CD8-positive, alpha-beta T cell (primary cell): ENCODE measurements at regions of chr1 and their contacts with region 1.

Region 1: DNA sequence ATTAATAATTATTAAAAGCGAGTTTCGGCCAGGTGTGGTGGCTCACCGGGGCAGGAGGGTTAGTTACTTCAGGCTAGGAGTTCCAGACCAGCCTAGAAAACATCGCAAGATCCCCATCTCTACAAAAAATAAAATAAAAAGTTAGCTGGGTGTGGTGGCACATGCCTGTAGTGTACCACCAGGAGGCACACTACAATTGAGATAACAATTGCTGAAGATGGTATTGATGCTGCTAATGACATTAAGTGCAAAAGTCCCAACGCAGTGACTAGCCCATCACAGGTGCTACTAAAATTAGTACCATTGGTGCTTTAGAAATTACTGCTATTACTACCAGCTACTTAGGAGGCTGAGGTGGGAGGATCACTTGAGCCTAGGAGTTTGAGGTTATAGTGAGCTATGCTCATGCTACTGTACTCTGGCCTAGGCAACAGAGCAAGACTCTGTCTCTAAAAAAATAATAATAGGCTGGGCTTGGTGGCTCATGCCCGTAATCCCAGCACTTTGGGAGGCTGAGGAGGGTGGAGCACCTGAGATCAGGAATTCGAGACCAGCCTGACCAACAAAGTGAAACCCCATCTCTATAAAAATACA is 156.6 kb downstream of the GREM2 start:
- DNase-seq: peak in 2 of 9 experiments; percentile 38 to 39
- ATAC-seq: no peak
- H3K4me3 ChIP-seq: no peak overlapping the region
- H3K4me3 Mint-ChIP-seq: no peak overlapping the region
- H3K27ac ChIP-seq: no peak overlapping the region
- H3K27ac Mint-ChIP-seq: no peak overlapping the region
- H3K4me1 ChIP-seq: no peaks in the 10 kb centered on the region
- H3K4me1 Mint-ChIP-seq: no peaks in the 10 kb centered on the region
- H3K27me3 ChIP-seq: no peaks in the 10 kb centered on the region
- H3K27me3 Mint-ChIP-seq: no peaks in the 10 kb centered on the region
- CTCF ChIP-seq: no peak

Region 2: DNA sequence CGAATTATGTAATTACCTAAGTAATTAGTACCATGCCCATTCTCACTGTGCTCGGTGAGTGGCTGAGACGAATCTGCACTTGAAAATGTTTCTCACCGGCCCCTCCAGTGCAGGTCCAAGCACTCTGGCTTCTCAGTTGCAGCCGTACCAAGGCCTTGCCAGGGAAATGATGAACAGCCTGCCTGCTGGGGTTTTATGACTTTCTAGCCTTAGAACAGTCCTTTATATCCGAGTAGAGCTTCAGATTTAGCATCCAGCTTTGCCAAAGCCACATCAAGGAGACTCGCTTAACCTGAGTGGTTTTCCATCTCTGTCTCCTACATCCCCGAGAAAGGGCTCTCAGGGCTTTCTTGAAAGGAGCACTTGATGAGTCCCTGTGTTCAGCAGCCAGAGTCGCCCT is 73.3 kb after region 1 on chr1:
- CTCF ChIA-PET with region 1: no interaction called
- POLR2A ChIA-PET with region 1: no interaction called
- intact Hi-C with region 1: no loop called
- DNase-seq: no peak
- ATAC-seq: no peak
- H3K4me3 ChIP-seq: no peak overlapping the region
- H3K4me3 Mint-ChIP-seq: no peak overlapping the region
- H3K27ac ChIP-seq: no peak overlapping the region
- H3K27ac Mint-ChIP-seq: no peak overlapping the region
- H3K4me1 ChIP-seq: no peaks in the 10 kb centered on the region
- H3K4me1 Mint-ChIP-seq: no peaks in the 10 kb centered on the region
- H3K27me3 ChIP-seq: no peaks in the 10 kb centered on the region
- H3K27me3 Mint-ChIP-seq: no peaks in the 10 kb centered on the region
- CTCF ChIP-seq: no peak

Region 3: GRCh38 chr1:240611619-240612480 is 156.5 kb after region 1 on chr1 and contains the start of gene GREM2:
- CTCF ChIA-PET with region 1: interaction called, 4 read pairs
- POLR2A ChIA-PET with region 1: no interaction called
- intact Hi-C with region 1: loop called (anchors 10 kb)
- DNase-seq: peak; percentile 6 to 51 (median 24)
- ATAC-seq: peak; percentile 23
- H3K4me3 ChIP-seq: peak within 1 kb of the TSS; percentile 35 to 48
- H3K4me3 Mint-ChIP-seq: peak within 1 kb of the TSS; percentile 85
- H3K27ac ChIP-seq: no peak within 1 kb of the TSS
- H3K27ac Mint-ChIP-seq: peak within 1 kb of the TSS; percentile 70
- H3K4me1 ChIP-seq: peaks cover 20% of the 10 kb centered on the region
- H3K4me1 Mint-ChIP-seq: peaks cover 15% of the 10 kb centered on the region
- H3K27me3 ChIP-seq: peaks cover 0 to 2% of the 10 kb centered on the region in 2 experiments
- H3K27me3 Mint-ChIP-seq: peaks cover 32% of the 10 kb centered on the region
- CTCF ChIP-seq: no peak
- total RNA-seq, gene GREM2: not detected

Region 4: DNA sequence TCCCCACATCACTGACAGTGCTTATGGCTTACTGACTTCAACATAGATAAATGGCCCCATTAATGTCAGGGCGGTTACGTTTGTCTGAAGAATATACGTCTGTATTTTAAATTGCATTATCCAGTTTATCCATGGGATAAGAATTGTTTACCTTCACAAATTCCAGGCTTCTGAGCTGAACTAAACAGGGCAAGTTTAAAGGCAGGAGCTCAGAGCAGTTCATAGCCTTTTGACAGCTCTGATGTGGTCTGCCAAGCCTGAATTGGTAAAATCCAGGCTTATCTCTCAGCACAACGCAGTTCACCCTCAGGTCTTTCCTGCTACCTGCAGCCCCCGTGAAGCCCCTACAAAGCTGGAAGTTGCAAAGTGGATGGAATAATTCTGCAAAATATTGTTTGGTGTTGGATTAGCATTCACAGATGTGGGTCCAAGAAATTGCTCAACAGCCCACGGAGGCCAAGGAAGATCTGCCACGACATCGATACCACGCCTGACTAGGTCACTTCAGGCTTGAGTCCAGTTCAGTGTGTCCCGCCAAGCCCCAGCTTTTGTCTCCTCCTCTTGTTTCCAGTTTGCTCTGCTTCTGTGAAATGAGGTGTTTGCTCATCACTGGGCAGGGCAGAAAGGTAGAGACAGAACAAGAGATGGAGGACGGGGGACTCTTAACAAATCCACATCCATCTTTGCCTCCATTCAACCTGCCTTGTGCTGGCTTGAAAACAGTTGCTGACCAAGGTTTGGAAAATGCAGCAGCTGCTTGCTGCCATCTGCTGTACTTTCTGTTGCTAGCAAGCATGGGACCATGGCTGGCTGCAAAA is 236.4 kb after region 1 on chr1:
- CTCF ChIA-PET with region 1: interaction called, 6 read pairs
- POLR2A ChIA-PET with region 1: no interaction called
- intact Hi-C with region 1: loop called (anchors 10 kb)
- DNase-seq: peak in 2 of 9 experiments; percentile 22 to 31
- ATAC-seq: no peak
- H3K4me3 ChIP-seq: no peak overlapping the region
- H3K4me3 Mint-ChIP-seq: no peak overlapping the region
- H3K27ac ChIP-seq: no peak overlapping the region
- H3K27ac Mint-ChIP-seq: no peak overlapping the region
- H3K4me1 ChIP-seq: no peaks in the 10 kb centered on the region
- H3K4me1 Mint-ChIP-seq: peaks cover 5% of the 10 kb centered on the region
- H3K27me3 ChIP-seq: no peaks in the 10 kb centered on the region
- H3K27me3 Mint-ChIP-seq: no peaks in the 10 kb centered on the region
- CTCF ChIP-seq: no peak